ENCODE measurements at regions of chr15 and their contacts with region 1.

Region 1: DNA sequence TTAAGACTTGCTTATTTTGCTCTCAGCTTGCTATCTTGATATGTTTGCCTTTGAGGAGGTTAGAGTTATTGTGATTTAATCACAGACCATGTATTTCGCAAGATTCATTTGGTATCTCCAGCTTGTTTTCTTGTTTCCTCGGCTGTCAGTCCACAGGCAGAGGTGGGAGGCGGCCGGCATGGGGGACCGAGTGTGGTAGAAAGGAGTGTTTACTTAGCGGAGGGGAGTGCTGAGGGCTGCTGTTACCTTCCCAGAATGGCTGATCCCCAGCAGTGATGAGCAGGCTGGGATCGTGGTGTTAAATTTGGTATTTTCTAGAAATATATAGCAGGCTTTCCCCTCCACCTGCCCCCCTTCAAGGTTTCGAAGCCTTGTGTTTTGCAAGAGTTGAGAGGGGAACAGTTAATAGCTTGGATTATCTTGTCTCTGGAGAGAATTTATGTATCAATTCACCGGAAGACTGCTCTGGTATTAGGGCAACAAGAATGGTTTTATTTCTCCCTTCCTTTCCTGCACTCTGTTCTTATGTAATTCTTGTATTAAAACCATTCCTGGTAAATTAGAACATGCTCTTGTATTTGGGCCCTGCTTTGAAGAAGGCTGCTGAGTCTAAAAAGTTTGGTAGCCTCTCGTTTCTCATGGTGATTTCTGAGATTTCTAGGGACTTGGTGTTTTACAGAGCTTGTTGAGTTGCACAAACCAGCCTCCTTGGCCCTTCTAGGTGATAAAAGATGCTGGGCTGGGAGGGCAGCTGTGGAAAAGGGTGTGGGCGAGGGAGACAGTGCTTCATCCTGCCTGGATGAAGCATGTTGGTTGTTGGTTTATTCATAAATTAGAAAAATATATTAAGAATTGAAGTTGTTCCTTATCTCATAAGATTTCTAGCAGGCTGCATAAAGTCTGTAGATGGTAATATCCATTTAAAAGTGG is 151.4 kb downstream of the IGF1R start:
- DNase-seq: no peak
- ATAC-seq: peak in 1 of 2 donors; percentile 43
- H3K4me3 ChIP-seq: no peak overlapping the region
- H3K27ac ChIP-seq: peak overlapping the region; percentile 75
- H3K4me1 ChIP-seq: peaks cover 18% of the 10 kb centered on the region
- H3K27me3 ChIP-seq: no peaks in the 10 kb centered on the region

Region 2: GRCh38 chr15:98845107-98845884 is 45.6 kb after region 1 on chr15:
- intact Hi-C with region 1: loop called in 1 of 4 experiments (anchors 10 kb)
- DNase-seq: no peak
- ATAC-seq: no peak
- H3K4me3 ChIP-seq: no peak overlapping the region
- H3K27ac ChIP-seq: no peak overlapping the region
- H3K4me1 ChIP-seq: peaks cover 6% of the 10 kb centered on the region
- H3K27me3 ChIP-seq: no peaks in the 10 kb centered on the region

Region 3: DNA sequence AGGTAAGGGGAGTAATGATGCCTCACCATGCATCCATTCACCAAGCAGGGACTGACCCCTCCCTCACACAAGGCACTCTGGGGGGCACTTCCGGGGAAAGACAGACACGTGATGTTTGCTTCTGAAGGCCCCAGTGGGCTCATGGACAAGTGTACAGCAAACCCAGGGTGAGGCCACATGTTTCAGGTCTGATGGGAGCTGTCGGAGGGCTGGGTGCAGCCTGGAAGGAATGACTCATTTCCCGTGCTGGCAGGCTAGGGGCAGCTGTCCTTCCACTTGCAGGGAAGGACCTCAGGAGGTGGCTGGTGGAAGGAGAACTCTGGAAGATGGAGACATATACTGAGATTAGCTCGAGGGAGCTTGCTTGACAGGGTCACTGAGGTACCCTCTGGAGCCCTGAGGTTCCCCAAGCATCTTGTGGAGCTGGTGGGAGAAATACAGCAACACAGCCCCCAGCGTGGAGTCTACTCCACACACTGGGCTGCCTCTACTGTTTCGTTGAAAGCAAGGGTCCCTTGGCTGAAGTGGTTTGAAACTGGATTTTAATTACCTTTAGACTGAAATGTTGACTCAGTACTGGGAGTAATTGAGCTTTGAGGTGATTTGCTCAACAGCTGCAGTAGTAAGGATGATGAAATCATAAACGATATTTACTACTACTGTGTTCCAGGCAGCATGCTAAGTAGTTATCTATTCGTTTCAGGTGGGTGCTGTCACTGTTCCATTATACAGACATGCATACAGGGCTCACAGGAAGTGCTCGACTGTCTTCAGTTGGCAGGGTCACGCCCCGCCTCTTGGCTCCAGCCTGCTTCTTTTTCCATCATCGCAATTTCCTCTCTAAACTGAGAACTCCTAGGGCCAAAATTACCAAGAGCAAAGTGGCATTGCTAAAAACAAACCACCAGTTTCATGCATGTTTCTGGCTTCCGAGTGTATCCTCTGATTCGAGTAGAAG is 1311.7 kb after region 1 on chr15:
- intact Hi-C with region 1: no loop called
- DNase-seq: peak; percentile 85 to 86 (median 86)
- ATAC-seq: peak; percentile 65 to 87
- H3K4me3 ChIP-seq: no peak overlapping the region
- H3K27ac ChIP-seq: peak overlapping the region; percentile 79
- H3K4me1 ChIP-seq: peaks cover 21% of the 10 kb centered on the region
- H3K27me3 ChIP-seq: no peaks in the 10 kb centered on the region

Measured in right cardiac atrium (tissue), 5 donors.